Endothelial cell of umbilical vein (primary cell): ENCODE measurements at regions of chr20 and their contacts with region 1.

Region 1: GRCh38 chr20:6231551-6231950 is 108.7 kb upstream of the FERMT1 start:
- DNase-seq: peak; percentile 66
- H3K4me3 ChIP-seq: no peak overlapping the region
- H3K27ac ChIP-seq: no peak overlapping the region
- H3K4me1 ChIP-seq: no peaks in the 10 kb centered on the region
- H3K27me3 ChIP-seq: peaks cover 0 to 5% of the 10 kb centered on the region in 2 experiments
- CTCF ChIP-seq: no peak
- POLR2A ChIP-seq: no peak

Region 2: DNA sequence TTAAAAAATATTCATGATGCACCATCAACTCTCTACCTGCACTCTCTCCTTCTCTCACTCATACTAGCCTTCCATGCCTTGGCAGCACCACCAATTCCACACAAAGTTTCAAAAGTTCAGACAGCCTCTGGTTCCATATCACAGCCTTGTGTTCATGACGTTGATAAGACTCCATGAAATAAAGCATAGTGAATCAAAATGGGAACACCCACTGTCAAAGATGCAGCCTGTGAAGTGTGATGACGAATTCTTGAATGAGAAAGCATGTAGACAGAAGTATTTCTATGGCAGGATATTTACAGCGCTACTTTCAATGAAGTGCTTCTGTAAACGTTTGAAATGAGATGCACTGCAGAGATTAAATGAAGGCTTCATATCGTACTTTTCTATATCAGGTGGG is 31.5 kb before region 1 on chr20:
- CTCF ChIA-PET with region 1: no interaction called
- POLR2A ChIA-PET with region 1: interaction called, 3 read pairs
- dilution Hi-C with region 1: no loop called
- intact Hi-C with region 1: loop called (anchors 1 kb)
- DNase-seq: no peak
- H3K4me3 ChIP-seq: no peak overlapping the region
- H3K27ac ChIP-seq: no peak overlapping the region
- H3K4me1 ChIP-seq: no peaks in the 10 kb centered on the region
- H3K27me3 ChIP-seq: no peaks in the 10 kb centered on the region
- CTCF ChIP-seq: no peak
- POLR2A ChIP-seq: no peak